ENCODE measurements at regions of chr19 and their contacts with region 1.

Region 1: DNA sequence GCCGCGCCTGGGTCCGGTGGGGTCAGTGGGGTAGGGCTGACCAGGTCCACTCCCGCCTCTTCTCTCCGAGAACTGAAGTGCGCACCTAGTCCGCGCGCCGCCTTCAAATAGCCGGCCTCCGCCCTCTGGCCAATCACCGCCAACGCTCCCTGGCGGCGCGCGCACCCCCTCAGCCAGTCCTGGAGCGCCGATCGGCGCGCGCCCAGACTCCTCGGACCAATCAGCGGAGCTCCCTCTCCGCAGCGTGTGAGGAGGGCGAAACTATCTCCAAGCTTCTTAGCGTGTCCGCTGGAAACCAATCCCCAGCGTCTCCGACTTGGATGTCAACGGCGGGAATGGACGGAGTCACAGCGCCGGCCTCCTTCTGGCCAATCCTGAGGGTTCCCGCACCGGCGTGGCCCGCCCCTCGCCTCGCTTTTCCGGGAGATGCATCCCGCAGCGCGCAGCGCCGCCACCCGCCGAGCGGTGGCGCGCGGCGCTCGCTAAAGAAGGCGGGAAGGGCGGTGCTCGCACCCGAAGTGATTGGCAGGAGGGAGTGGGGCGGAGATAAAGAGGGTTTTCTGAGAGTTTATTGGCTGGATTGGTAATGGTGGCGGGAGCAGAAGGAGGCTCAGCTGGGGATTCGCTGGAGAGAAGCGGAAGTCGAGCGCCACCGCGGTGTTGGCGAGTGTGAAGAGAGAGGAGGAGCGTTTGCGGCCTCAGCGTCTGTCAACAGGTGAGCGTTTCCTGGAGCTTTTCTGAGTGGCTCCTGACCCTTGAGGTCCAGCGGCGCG is at the start of gene ASF1B:
- DNase-seq: peak; percentile 99
- H3K4me3 Mint-ChIP-seq: peak within 1 kb of the TSS; percentile 81
- H3K27ac Mint-ChIP-seq: peak within 1 kb of the TSS; percentile 93
- H3K4me1 Mint-ChIP-seq: peaks cover 44% of the 10 kb centered on the region
- H3K27me3 Mint-ChIP-seq: no peaks in the 10 kb centered on the region
- total RNA-seq, gene ASF1B: 119 to 131 TPM

Region 2: GRCh38 chr19:14081325-14082093 is 55.2 kb before region 1 on chr19:
- CTCF ChIA-PET with region 1: interaction called, 10 read pairs
- POLR2A ChIA-PET with region 1: no interaction called
- DNase-seq: peak; percentile 100
- H3K4me3 Mint-ChIP-seq: peak overlapping the region; percentile 90
- H3K27ac Mint-ChIP-seq: peak overlapping the region; percentile 96
- H3K4me1 Mint-ChIP-seq: peaks cover 27% of the 10 kb centered on the region
- H3K27me3 Mint-ChIP-seq: no peaks in the 10 kb centered on the region

Region 3: DNA sequence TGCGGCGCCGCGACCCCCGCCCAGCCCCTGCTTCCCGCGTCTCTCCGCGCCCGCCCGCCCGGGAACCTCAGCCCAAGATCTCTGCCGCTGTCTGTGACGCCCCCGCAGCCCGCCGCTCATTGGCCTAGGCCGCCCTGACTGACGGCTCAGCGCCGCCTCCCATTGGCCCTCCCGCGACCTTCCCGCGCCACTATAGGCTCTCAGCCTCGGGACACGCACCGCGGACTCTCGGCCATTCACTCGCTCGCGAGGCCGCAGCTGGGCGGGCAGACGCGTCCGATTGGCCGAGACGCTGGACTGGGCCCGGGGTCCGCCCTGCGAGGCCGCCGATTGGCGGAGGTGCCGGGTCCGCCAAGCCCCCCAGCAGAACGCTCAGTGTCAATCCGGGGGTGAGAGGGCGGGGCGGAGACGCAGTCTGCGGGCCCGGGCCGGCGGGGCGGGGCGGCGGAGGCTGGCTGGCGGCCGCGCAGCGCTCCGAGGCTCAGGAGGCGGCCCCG is 19.0 kb before region 1 on chr19 and contains the start of gene PRKACA:
- CTCF ChIA-PET with region 1: interaction called, 20 read pairs
- POLR2A ChIA-PET with region 1: no interaction called
- DNase-seq: peak; percentile 98
- H3K4me3 Mint-ChIP-seq: peak within 1 kb of the TSS; percentile 90
- H3K27ac Mint-ChIP-seq: peak within 1 kb of the TSS; percentile 85
- H3K4me1 Mint-ChIP-seq: peaks cover 48% of the 10 kb centered on the region
- H3K27me3 Mint-ChIP-seq: no peaks in the 10 kb centered on the region
- total RNA-seq, gene PRKACA: 50.6 to 56.8 TPM

Region 4: GRCh38 chr19:14167576-14168138 is 31.0 kb after region 1 on chr19:
- CTCF ChIA-PET with region 1: interaction called, 10 read pairs
- POLR2A ChIA-PET with region 1: no interaction called
- DNase-seq: peak; percentile 19
- H3K4me3 Mint-ChIP-seq: peak overlapping the region; percentile 70
- H3K27ac Mint-ChIP-seq: peak overlapping the region; percentile 87
- H3K4me1 Mint-ChIP-seq: peaks cover 23% of the 10 kb centered on the region
- H3K27me3 Mint-ChIP-seq: no peaks in the 10 kb centered on the region

Region 5: DNA sequence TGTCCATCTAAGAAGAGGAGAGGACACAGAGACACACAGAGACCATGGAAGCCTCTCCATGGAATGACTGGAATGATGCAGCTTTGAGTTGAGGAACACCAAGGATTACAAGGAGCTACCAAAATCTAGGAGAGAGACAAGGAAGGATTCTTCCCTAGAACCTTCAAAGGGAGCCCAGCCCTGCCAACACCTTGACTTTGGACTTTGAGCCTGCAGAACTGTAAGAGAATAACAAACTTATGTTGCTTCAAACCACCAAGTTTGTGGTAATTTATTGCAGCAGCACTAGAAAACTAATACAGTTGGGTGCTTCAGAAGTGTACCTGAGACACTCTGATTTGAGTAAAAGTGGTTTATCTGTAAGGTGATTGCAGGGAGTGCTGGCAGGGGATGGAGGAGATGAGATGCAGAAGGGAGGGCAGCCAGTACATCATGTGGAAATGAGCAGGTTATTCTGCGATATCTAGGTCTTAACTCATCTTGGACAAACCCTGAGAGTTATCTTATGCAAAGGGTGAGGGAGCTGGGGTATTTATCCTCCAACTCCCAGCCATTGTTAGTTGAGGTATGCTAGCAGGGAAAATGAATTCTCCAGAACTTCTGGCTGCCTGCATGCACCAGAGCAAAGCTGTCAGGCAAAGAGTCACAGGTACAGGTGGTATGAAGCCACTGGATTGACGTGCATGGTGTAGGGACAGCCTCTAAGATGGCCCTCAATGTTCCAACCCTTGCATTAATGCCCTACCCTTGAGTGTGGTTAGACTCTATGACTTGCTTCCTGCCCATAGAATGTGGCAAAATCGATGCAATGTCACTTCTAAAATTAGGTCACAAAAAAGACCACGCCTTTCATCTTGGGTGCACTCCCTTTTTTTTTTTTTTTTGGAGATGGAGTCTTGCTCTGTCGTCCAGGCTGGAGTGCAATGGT is 100.6 kb after region 1 on chr19:
- CTCF ChIA-PET with region 1: no interaction called
- POLR2A ChIA-PET with region 1: no interaction called
- DNase-seq: no peak
- H3K4me3 Mint-ChIP-seq: no peak overlapping the region
- H3K27ac Mint-ChIP-seq: no peak overlapping the region
- H3K4me1 Mint-ChIP-seq: peaks cover 6% of the 10 kb centered on the region
- H3K27me3 Mint-ChIP-seq: peaks cover 3% of the 10 kb centered on the region

Region 6: DNA sequence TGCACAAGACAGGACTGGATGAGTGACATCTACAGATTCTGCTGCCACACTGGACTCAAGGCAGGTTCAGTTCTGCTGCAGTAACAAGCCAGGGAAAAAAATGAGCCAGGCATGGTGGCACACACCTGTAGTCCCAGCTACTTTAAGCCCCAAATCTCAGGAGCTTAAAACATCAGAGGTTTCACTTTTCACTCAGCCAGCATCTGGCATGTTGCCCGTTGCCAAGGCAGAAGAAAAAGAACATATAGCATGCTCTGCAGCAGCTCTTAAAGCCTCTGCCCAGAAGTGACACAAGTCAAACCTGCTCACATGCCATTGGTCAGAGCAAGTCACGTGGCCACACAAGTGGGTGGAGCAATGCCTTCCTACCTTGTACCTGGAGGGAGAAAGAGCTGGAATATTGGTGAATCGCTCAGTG is 229.8 kb after region 1 on chr19:
- CTCF ChIA-PET with region 1: interaction called, 10 read pairs
- POLR2A ChIA-PET with region 1: interaction called, 3 read pairs
- DNase-seq: peak; percentile 96
- H3K4me3 Mint-ChIP-seq: peak overlapping the region; percentile 50
- H3K27ac Mint-ChIP-seq: peak overlapping the region; percentile 99
- H3K4me1 Mint-ChIP-seq: peaks cover 76% of the 10 kb centered on the region
- H3K27me3 Mint-ChIP-seq: no peaks in the 10 kb centered on the region

Region 7: DNA sequence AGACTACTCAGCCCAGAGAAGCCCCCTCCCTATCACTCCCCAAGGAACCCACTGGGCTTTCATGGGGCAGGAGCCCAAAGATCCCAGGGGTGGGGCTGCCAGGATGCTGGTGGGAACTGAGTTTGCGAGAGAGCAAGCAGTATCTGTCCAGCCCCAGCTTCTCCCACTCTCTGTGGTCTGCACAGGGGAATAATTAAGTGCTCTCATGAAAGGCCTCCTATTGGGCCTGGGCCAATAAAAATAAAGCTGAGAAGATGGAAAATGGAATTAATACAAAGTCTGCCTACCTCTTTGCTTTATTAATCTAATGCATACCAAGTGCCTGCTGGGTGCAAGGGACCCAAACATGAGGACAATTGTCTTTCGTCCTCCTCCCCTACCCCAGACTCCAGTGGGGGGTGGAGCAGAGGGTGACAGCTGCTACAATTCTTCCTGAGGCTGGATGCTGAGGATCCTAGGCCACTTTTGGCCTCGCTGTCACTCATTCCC is 277.0 kb after region 1 on chr19:
- CTCF ChIA-PET with region 1: interaction called, 10 read pairs
- POLR2A ChIA-PET with region 1: no interaction called
- DNase-seq: no peak
- H3K4me3 Mint-ChIP-seq: no peak overlapping the region
- H3K27ac Mint-ChIP-seq: peak overlapping the region; percentile 50
- H3K4me1 Mint-ChIP-seq: peaks cover 54% of the 10 kb centered on the region
- H3K27me3 Mint-ChIP-seq: no peaks in the 10 kb centered on the region